Ascending aorta (tissue), 2 donors: ENCODE measurements at regions of chrX and their contacts with region 1.

Region 1: DNA sequence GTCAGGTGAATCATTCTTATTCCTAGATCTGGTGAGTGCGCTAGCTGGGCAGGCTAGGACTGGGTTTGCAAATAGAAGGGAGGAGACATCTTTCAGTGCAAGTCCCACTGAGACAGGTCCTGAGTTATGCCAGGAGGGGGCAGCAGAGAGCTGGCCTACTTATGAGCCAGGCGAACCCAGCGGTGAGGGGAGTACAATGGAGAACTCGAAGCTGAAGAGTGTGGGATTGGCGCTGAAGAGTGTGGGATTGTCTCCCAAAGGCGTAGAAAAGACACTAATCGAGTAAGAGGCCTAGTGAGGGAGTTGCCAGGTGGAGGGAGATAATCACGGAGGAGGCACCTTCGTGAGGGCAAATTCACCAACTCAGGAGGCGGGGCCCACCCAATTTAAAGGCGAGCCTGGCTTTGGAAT is 91.7 kb upstream of the CXorf66 start:
- DNase-seq: peak in 1 of 2 donors; percentile 81
- H3K4me3 ChIP-seq: no peak overlapping the region
- H3K27ac ChIP-seq: no peak overlapping the region
- H3K4me1 ChIP-seq: no peaks in the 10 kb centered on the region
- H3K27me3 ChIP-seq: no peaks in the 10 kb centered on the region
- CTCF ChIP-seq: peak; percentile 32 to 85 (median 72)

Region 2: GRCh38 chrX:139784807-139785206 is 272.2 kb before region 1 on chrX:
- intact Hi-C with region 1: no loop called
- DNase-seq: no peak
- H3K4me3 ChIP-seq: no peak overlapping the region
- H3K27ac ChIP-seq: no peak overlapping the region
- H3K4me1 ChIP-seq: no peaks in the 10 kb centered on the region
- H3K27me3 ChIP-seq: no peaks in the 10 kb centered on the region
- CTCF ChIP-seq: no peak

Region 3: DNA sequence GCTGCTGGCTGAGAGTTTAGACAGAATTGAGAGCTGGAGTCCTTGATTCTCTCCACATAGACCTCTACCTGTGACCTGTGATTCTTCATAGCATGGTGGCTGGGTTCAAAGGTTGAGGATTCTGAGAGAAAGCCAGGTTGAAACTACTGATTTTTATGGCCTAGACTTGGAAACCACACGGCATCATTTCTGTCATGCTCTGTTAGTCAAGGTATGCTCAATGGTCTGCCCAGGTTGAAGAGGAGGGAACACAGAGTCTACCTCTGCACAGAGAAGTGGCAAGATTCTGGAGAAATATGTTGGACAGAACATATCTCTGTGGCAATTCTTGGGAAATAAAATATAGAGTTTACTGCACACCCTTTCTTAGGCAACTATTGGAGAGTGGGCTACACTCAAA is 34.5 kb before region 1 on chrX:
- intact Hi-C with region 1: no loop called
- DNase-seq: no peak
- H3K4me3 ChIP-seq: no peak overlapping the region
- H3K27ac ChIP-seq: no peak overlapping the region
- H3K4me1 ChIP-seq: no peaks in the 10 kb centered on the region
- H3K27me3 ChIP-seq: no peaks in the 10 kb centered on the region
- CTCF ChIP-seq: no peak

Region 4: DNA sequence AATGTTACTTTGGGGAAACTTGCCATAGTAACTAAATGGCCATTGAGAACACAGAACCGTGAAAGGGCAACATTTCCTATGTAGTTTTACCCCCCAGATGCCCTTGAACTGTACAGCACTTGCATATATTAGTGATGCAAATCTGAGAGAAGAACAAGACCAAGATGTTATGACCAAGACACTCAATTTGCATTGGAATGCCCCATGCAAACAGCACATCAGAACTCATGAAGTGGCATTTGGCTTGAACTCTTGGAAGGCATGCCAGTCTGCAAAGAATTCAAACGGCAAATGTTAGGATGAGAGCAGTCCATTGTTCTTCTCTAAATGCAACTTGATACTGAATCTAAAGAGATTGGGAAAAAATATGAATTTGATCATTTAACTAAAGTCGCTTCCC is 47.8 kb after region 1 on chrX:
- intact Hi-C with region 1: no loop called
- DNase-seq: no peak
- H3K4me3 ChIP-seq: no peak overlapping the region
- H3K27ac ChIP-seq: no peak overlapping the region
- H3K4me1 ChIP-seq: no peaks in the 10 kb centered on the region
- H3K27me3 ChIP-seq: no peaks in the 10 kb centered on the region
- CTCF ChIP-seq: no peak

Region 5: GRCh38 chrX:140141444-140142029 is 84.5 kb after region 1 on chrX:
- intact Hi-C with region 1: loop called (anchors 1 kb)
- DNase-seq: no peak
- H3K4me3 ChIP-seq: no peak overlapping the region
- H3K27ac ChIP-seq: no peak overlapping the region
- H3K4me1 ChIP-seq: no peaks in the 10 kb centered on the region
- H3K27me3 ChIP-seq: no peaks in the 10 kb centered on the region
- CTCF ChIP-seq: peak in 2 of 3 experiments; percentile 51 to 68

Region 6: GRCh38 chrX:140664939-140665338 is 607.9 kb after region 1 on chrX:
- intact Hi-C with region 1: loop called (anchors 10 kb)
- DNase-seq: no peak
- H3K4me3 ChIP-seq: no peak overlapping the region
- H3K27ac ChIP-seq: no peak overlapping the region
- H3K4me1 ChIP-seq: no peaks in the 10 kb centered on the region
- H3K27me3 ChIP-seq: no peaks in the 10 kb centered on the region
- CTCF ChIP-seq: no peak

Region 7: DNA sequence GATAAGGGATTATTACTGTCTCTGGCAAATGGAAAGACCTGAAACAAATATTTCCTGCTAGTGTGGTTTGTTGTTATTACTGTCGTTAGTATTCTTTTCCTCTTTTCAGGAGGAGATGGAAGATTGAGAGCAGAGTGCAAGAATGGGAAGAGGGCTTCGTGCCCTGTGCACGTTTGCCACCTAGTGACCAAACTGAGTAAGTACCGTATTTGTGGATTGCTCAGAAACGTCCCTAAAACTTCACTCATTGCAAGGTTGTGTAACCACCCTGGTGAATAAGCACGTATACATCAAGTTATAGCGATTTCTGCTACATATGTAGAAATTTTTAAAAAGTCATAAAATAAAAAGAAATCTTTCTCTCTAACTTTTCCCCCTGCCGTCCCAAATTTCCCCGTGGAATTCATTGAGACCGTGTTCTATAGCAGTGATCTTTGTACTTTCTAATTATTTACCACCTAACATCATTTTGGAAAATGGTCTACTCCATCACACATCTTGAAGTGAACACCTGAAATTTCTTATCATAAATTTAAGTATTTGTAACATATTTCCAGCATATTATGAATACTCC is 676.9 kb after region 1 on chrX:
- intact Hi-C with region 1: loop called (anchors 10 kb)
- DNase-seq: no peak
- H3K4me3 ChIP-seq: no peak overlapping the region
- H3K27ac ChIP-seq: no peak overlapping the region
- H3K4me1 ChIP-seq: no peaks in the 10 kb centered on the region
- H3K27me3 ChIP-seq: no peaks in the 10 kb centered on the region
- CTCF ChIP-seq: peak; percentile 37 to 78 (median 77)